B cell (primary cell): ENCODE measurements at regions of chr12 and their contacts with region 1.

Region 1: GRCh38 chr12:64222009-64222765 is at the start of gene KICS2:
- DNase-seq: peak; percentile 98
- ATAC-seq: peak; percentile 86
- H3K4me3 ChIP-seq: peak within 1 kb of the TSS; percentile 58 to 89 (median 80)
- H3K4me3 Mint-ChIP-seq: peak within 1 kb of the TSS; percentile 93
- H3K27ac ChIP-seq: peak within 1 kb of the TSS; percentile 92 to 97
- H3K27ac Mint-ChIP-seq: peak within 1 kb of the TSS; percentile 96
- H3K4me1 ChIP-seq: peaks cover 10 to 20% of the 10 kb centered on the region in 2 donors
- H3K4me1 Mint-ChIP-seq: peaks cover 31% of the 10 kb centered on the region
- H3K27me3 ChIP-seq: peaks cover 0 to 3% (median 0%) of the 10 kb centered on the region in 4 experiments
- H3K27me3 Mint-ChIP-seq: peaks cover 8% of the 10 kb centered on the region
- CTCF ChIP-seq: no peak
- total RNA-seq, gene KICS2: 18.7 and 21.2 TPM in 2 replicates

Region 2: GRCh38 chr12:62466594-62467491 is 1755.3 kb before region 1 on chr12 and contains the start of gene MON2:
- CTCF ChIA-PET with region 1: no interaction called
- POLR2A ChIA-PET with region 1: no interaction called
- intact Hi-C with region 1: loop called (anchors 5 kb)
- DNase-seq: peak; percentile 90
- ATAC-seq: peak; percentile 97
- H3K4me3 ChIP-seq: peak within 1 kb of the TSS; percentile 70 to 95 (median 91)
- H3K4me3 Mint-ChIP-seq: peak within 1 kb of the TSS; percentile 97
- H3K27ac ChIP-seq: peak within 1 kb of the TSS; percentile 91 to 93
- H3K27ac Mint-ChIP-seq: peak within 1 kb of the TSS; percentile 86
- H3K4me1 ChIP-seq: peaks cover 23 to 25% of the 10 kb centered on the region in 2 donors
- H3K4me1 Mint-ChIP-seq: peaks cover 27% of the 10 kb centered on the region
- H3K27me3 ChIP-seq: no peaks in the 10 kb centered on the region
- H3K27me3 Mint-ChIP-seq: no peaks in the 10 kb centered on the region
- CTCF ChIP-seq: no peak
- total RNA-seq, gene MON2: 104 and 118 TPM in 2 replicates

Region 3: DNA sequence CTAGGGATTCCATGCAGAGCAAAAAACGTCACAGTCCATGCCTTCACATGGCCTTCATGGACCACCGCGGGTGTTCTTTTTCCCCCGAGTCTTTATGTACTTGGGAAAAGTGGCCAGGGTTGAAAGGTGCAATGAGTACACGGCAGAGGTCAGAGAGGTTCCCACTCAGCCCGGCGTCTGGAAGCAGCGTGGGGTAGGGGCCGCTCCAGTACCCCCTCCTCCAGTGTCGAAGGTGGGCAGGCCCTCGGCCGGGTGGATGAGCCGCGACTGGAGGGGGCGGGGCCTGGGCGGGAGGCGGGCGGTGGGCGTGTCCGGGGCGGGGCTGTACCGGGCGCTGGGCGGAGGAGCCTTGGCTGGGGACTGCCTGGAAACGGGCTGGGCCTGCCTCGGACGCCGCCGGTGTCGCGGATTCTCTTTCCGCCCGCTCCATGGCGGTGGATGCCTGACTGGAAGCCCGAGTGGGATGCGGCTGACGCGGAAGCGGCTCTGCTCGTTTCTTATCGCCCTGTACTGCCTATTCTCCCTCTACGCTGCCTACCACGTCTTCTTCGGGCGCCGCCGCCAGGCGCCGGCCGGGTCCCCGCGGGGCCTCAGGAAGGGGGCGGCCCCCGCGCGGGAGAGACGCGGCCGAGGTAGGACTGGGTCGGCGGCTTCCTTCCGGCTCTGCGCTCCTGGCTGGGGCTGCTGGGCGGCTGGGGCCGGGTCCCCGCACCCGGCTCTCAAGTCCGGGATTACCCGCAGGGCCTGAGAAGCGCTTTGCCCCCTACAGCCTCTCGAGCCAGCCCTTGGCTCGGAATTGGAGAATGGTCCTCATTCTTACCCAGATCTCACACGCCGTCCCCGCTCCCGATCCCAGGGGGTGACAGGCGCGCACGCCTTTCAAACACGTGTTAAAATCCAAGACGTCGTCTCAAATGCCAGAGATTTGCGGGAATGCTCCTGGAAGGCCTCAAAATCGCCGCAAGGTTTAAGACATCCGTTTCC is 442.4 kb before region 1 on chr12 and contains the start of gene RXYLT1:
- CTCF ChIA-PET with region 1: no interaction called
- POLR2A ChIA-PET with region 1: no interaction called
- intact Hi-C with region 1: loop called (anchors 1 kb)
- DNase-seq: peak; percentile 92
- ATAC-seq: peak; percentile 93
- H3K4me3 ChIP-seq: peak within 1 kb of the TSS; percentile 76 to 90 (median 85)
- H3K4me3 Mint-ChIP-seq: peak within 1 kb of the TSS; percentile 98
- H3K27ac ChIP-seq: peak within 1 kb of the TSS; percentile 77 to 91
- H3K27ac Mint-ChIP-seq: peak within 1 kb of the TSS; percentile 95
- H3K4me1 ChIP-seq: peaks cover 6 to 8% of the 10 kb centered on the region in 2 donors
- H3K4me1 Mint-ChIP-seq: peaks cover 16% of the 10 kb centered on the region
- H3K27me3 ChIP-seq: no peaks in the 10 kb centered on the region
- H3K27me3 Mint-ChIP-seq: no peaks in the 10 kb centered on the region
- CTCF ChIP-seq: no peak
- total RNA-seq, gene RXYLT1: 16.2 and 16.5 TPM in 2 replicates

Region 4: DNA sequence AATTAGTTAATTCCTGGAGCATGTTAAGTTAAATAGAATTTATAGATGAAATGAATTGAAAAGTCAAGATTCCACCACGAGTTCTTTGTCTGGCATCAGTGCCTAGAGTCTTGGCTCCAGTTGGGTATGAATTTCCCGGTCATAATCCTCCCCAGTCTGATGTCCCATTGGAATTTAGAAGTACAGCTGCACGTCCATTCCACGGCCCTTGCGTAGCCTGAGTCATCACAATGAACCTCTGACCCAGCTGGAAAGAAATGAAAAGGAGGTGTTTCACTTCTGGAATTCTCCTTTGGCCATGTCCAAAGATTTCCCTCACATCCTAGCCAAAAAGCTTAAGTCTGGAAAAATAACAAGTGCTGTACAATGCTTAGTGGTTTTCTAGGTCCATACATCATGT is 122.8 kb before region 1 on chr12:
- CTCF ChIA-PET with region 1: no interaction called
- POLR2A ChIA-PET with region 1: no interaction called
- intact Hi-C with region 1: no loop called
- DNase-seq: no peak
- ATAC-seq: no peak
- H3K4me3 ChIP-seq: no peak overlapping the region
- H3K4me3 Mint-ChIP-seq: no peak overlapping the region
- H3K27ac ChIP-seq: no peak overlapping the region
- H3K27ac Mint-ChIP-seq: no peak overlapping the region
- H3K4me1 ChIP-seq: no peaks in the 10 kb centered on the region
- H3K4me1 Mint-ChIP-seq: no peaks in the 10 kb centered on the region
- H3K27me3 ChIP-seq: no peaks in the 10 kb centered on the region
- H3K27me3 Mint-ChIP-seq: peaks cover 10% of the 10 kb centered on the region
- CTCF ChIP-seq: no peak

Region 5: DNA sequence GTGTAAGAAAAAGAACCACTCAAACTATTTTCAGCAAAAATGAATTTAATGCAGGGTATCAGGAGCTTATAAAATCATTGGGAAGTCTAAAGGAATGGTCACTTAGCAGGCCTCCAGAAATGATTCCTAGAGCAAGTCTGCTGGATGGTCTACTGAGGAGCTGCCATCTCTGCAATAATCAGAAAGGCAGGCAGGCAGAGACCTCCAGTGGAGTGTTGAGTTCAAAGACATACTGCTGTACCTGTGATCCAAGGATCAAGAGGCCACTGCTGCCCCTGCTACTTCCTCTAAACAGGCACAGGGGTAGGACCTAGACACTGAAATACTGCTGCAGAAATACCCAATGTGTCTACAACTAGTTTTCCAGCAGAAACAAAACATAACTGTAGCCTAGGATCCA is 14.4 kb after region 1 on chr12:
- CTCF ChIA-PET with region 1: no interaction called
- POLR2A ChIA-PET with region 1: no interaction called
- intact Hi-C with region 1: no loop called
- DNase-seq: no peak
- ATAC-seq: no peak
- H3K4me3 ChIP-seq: no peak overlapping the region
- H3K4me3 Mint-ChIP-seq: no peak overlapping the region
- H3K27ac ChIP-seq: no peak overlapping the region
- H3K27ac Mint-ChIP-seq: no peak overlapping the region
- H3K4me1 ChIP-seq: no peaks in the 10 kb centered on the region
- H3K4me1 Mint-ChIP-seq: no peaks in the 10 kb centered on the region
- H3K27me3 ChIP-seq: no peaks in the 10 kb centered on the region
- H3K27me3 Mint-ChIP-seq: peaks cover 7% of the 10 kb centered on the region
- CTCF ChIP-seq: no peak

Region 6: GRCh38 chr12:64759035-64759901 is 537.1 kb after region 1 on chr12 and contains the start of gene GNS:
- CTCF ChIA-PET with region 1: no interaction called
- POLR2A ChIA-PET with region 1: no interaction called
- intact Hi-C with region 1: loop called (anchors 5 kb)
- DNase-seq: peak; percentile 94
- ATAC-seq: peak; percentile 92
- H3K4me3 ChIP-seq: peak within 1 kb of the TSS; percentile 67 to 89 (median 84)
- H3K4me3 Mint-ChIP-seq: peak within 1 kb of the TSS; percentile 94
- H3K27ac ChIP-seq: peak within 1 kb of the TSS; percentile 48 to 86
- H3K27ac Mint-ChIP-seq: peak within 1 kb of the TSS; percentile 94
- H3K4me1 ChIP-seq: peaks cover 24 to 25% of the 10 kb centered on the region in 2 donors
- H3K4me1 Mint-ChIP-seq: peaks cover 41% of the 10 kb centered on the region
- H3K27me3 ChIP-seq: no peaks in the 10 kb centered on the region
- H3K27me3 Mint-ChIP-seq: no peaks in the 10 kb centered on the region
- CTCF ChIP-seq: no peak
- total RNA-seq, gene GNS: 26.7 and 31.7 TPM in 2 replicates